Activated B cell treated with CpG ODN at 0.5 μM for 24 hours (primary cell): ENCODE measurements at regions of chr3 and their contacts with region 1.

Region 1: GRCh38 chr3:12984023-12984823 is 89.0 kb downstream of the IQSEC1 start:
- DNase-seq: no peak
- ATAC-seq: peak; percentile 51
- H3K4me3 Mint-ChIP-seq: peak overlapping the region; percentile 35
- H3K27ac Mint-ChIP-seq: peak overlapping the region; percentile 56
- H3K4me1 Mint-ChIP-seq: peaks cover 90% of the 10 kb centered on the region
- H3K27me3 Mint-ChIP-seq: no peaks in the 10 kb centered on the region
- CTCF ChIP-seq: no peak

Region 2: GRCh38 chr3:12303534-12303933 is 680.7 kb before region 1 on chr3:
- CTCF ChIA-PET with region 1: no interaction called
- POLR2A ChIA-PET with region 1: no interaction called
- intact Hi-C with region 1: no loop called
- DNase-seq: no peak
- ATAC-seq: no peak
- H3K4me3 Mint-ChIP-seq: no peak overlapping the region
- H3K27ac Mint-ChIP-seq: no peak overlapping the region
- H3K4me1 Mint-ChIP-seq: no peaks in the 10 kb centered on the region
- H3K27me3 Mint-ChIP-seq: peaks cover 7% of the 10 kb centered on the region
- CTCF ChIP-seq: no peak

Region 3: DNA sequence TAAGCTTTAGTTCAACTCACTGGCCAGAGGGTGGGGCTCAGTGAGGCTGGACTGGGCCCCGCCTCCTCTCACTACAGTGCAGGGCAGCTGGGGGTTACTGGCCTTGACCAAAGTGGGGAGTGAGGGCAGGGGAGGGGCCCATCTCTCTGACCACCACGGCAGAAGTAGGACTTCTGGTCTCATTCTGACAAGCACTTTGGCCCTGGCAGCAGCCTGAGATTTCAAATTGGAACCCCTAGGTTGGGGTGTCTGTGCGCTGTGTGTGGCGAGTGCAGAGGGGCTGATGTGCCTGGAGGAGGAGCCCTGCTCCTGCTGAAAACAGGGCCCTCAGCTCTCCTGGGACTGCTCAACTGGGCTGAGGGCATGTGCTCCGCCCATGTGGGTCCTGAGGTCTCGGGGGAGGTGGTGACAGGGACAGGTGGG is 82.6 kb before region 1 on chr3:
- CTCF ChIA-PET with region 1: interaction called, 3 read pairs
- POLR2A ChIA-PET with region 1: no interaction called
- intact Hi-C with region 1: loop called (anchors 5 kb)
- DNase-seq: no peak
- ATAC-seq: peak; percentile 75
- H3K4me3 Mint-ChIP-seq: no peak overlapping the region
- H3K27ac Mint-ChIP-seq: peak overlapping the region; percentile 72
- H3K4me1 Mint-ChIP-seq: peaks cover 39% of the 10 kb centered on the region
- H3K27me3 Mint-ChIP-seq: no peaks in the 10 kb centered on the region
- CTCF ChIP-seq: no peak

Region 4: DNA sequence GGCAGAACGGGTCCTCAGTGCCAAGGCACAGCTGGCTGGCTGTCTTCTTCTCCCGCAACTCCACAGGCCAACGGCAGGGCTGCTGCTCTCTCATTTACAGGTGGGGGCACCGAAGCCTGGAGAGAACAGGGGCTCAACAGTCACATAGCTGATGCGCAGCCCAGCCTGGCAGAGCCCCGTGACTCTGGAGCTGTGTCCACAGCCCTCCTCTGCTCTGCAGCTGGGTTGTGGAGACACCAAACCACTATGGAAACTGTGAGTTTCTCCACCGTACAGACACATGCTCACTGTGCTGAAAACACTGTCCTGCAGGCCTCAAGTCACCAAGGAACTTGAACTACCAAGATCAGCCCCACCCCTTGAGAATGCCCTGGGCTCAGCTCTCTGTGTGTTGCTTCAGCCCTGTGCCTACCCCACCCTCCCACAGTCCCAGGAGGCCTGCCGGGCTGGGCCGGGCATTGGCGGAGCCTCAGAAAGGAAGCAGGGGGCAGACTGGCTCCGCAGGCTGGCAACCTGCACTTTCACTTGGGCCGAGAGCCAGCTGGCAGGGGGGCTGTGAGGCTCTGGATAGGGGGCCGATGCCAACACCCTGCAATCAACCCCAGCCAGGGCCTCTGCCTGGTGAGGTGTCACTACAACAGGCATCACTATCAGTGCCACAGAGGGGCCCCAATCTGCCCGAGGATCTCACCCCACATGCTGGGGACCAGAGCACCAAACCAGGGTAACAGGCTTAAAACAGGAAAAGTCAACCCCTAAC is 29.2 kb before region 1 on chr3:
- CTCF ChIA-PET with region 1: interaction called, 5 read pairs
- POLR2A ChIA-PET with region 1: interaction called, 6 read pairs
- intact Hi-C with region 1: loop called (anchors 1 kb)
- DNase-seq: peak; percentile 67
- ATAC-seq: peak; percentile 95
- H3K4me3 Mint-ChIP-seq: peak overlapping the region; percentile 63
- H3K27ac Mint-ChIP-seq: peak overlapping the region; percentile 82
- H3K4me1 Mint-ChIP-seq: peaks cover 86% of the 10 kb centered on the region
- H3K27me3 Mint-ChIP-seq: no peaks in the 10 kb centered on the region
- CTCF ChIP-seq: no peak

Region 5: DNA sequence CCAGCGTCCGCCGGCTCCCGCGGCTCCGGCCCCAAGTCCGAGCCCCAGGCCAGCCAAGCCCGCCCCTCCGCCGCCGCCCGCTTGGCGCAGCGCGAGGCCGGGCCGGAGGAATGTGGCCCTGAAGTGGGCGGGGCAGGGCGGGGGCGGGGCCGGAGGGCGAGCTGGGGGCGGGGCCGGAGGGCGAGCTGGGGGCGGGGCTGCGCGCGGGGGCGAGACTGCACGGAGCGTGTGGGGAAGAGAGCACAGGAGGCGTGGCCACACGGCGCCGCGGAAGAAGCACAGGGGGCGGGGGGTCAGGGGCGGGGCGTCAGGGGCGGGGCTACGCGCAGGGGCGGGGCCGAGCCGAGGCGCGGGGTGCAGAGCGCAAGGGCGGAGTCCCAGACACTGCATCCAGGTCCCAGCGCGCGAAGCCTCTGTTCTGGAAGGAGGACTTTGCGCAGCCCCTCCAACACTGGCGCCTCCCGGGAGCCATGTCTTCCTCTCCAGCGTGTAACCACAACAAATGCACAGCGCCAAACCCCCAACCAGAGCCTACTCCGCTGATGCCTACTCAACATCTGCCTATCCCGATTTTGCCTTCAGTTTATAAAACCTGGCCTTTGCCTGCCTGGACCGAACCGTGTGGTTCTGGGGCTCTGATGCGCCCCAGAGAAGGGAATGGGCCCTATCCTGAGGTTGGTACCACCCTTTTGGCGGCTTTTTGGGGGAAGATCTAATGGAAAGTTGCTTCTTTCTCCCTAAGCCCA is 16.4 kb before region 1 on chr3:
- CTCF ChIA-PET with region 1: interaction called, 6 read pairs
- POLR2A ChIA-PET with region 1: interaction called, 4 read pairs
- intact Hi-C with region 1: loop called (anchors 2 kb)
- DNase-seq: peak; percentile 77
- ATAC-seq: peak; percentile 96
- H3K4me3 Mint-ChIP-seq: peak overlapping the region; percentile 72
- H3K27ac Mint-ChIP-seq: peak overlapping the region; percentile 20
- H3K4me1 Mint-ChIP-seq: peaks cover 86% of the 10 kb centered on the region
- H3K27me3 Mint-ChIP-seq: no peaks in the 10 kb centered on the region
- CTCF ChIP-seq: no peak

Region 6: DNA sequence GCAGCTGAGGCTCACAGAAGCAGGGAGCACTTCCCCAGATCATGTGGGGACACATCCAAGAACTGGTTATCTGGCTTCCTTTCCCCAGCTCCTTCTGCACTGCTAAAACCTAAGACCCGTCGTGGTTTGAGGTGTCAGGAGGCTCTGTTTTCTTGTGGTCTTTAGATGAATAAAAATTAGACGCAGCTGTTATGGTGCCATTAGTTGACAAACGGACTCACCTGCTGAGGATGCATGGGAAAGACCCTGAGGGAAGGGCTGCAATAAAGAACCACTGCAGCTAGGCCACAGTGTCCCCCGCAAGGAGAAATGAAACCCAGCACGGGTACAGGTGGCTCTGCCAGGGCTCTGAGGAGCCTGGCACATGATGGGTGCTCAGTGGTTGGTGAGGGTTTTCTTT is 10.4 kb before region 1 on chr3:
- CTCF ChIA-PET with region 1: interaction called, 6 read pairs
- POLR2A ChIA-PET with region 1: interaction called, 4 read pairs
- intact Hi-C with region 1: loop called (anchors 1 kb)
- DNase-seq: no peak
- ATAC-seq: peak; percentile 61
- H3K4me3 Mint-ChIP-seq: no peak overlapping the region
- H3K27ac Mint-ChIP-seq: no peak overlapping the region
- H3K4me1 Mint-ChIP-seq: peaks cover 81% of the 10 kb centered on the region
- H3K27me3 Mint-ChIP-seq: no peaks in the 10 kb centered on the region
- CTCF ChIP-seq: no peak

Region 7: GRCh38 chr3:12994607-12995388 is 10.6 kb after region 1 on chr3:
- CTCF ChIA-PET with region 1: interaction called, 13 read pairs
- POLR2A ChIA-PET with region 1: interaction called, 7 read pairs
- intact Hi-C with region 1: no loop called
- DNase-seq: peak; percentile 81
- ATAC-seq: peak; percentile 70
- H3K4me3 Mint-ChIP-seq: peak overlapping the region; percentile 89
- H3K27ac Mint-ChIP-seq: peak overlapping the region; percentile 88
- H3K4me1 Mint-ChIP-seq: peaks cover 85% of the 10 kb centered on the region
- H3K27me3 Mint-ChIP-seq: no peaks in the 10 kb centered on the region
- CTCF ChIP-seq: peak; percentile 93

Region 8: DNA sequence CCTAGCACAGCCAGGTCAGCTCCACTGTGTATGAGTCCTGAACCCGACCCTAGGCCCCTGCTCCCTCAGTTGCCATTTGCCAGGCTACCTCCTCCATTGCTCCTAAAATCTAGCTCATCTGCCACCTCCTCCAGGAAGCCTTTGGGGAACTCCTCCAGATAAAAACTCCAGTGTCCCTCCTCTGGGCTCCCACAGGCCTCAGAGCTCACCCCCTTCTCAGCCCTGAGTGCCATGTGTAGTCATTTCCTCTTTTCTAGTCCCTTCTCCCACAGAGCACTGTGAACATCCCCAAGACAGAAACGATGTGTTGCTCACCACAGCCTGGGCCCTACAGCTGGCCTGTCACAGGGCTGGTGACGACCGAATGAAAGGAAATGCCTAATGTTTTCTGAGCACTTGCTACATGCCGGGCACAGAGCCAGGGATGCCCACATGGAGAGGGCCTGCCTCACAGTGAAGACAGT is 28.0 kb after region 1 on chr3:
- CTCF ChIA-PET with region 1: interaction called, 3 read pairs
- POLR2A ChIA-PET with region 1: interaction called, 11 read pairs
- intact Hi-C with region 1: no loop called
- DNase-seq: no peak
- ATAC-seq: peak; percentile 36
- H3K4me3 Mint-ChIP-seq: peak overlapping the region; percentile 87
- H3K27ac Mint-ChIP-seq: peak overlapping the region; percentile 95
- H3K4me1 Mint-ChIP-seq: peaks cover 98% of the 10 kb centered on the region
- H3K27me3 Mint-ChIP-seq: no peaks in the 10 kb centered on the region
- CTCF ChIP-seq: no peak